ENCODE measurements at regions of chr4 and their contacts with region 1.

Region 1: GRCh38 chr4:87901422-87901992 is 68.7 kb downstream of the MEPE start:
- DNase-seq: no peak
- H3K4me3 ChIP-seq: no peak overlapping the region
- H3K27ac ChIP-seq: peak overlapping the region in 12 of 59 donors; percentile 5 to 58 (median 32)
- H3K27me3 ChIP-seq: no peaks in the 10 kb centered on the region
- CTCF ChIP-seq: no peak

Region 2: GRCh38 chr4:87058356-87059073 is 843.0 kb before region 1 on chr4:
- intact Hi-C with region 1: no loop called
- DNase-seq: peak in 5 of 10 donors; percentile 43 to 64 (median 59)
- H3K4me3 ChIP-seq: no peak overlapping the region
- H3K27ac ChIP-seq: peak overlapping the region in 48 of 59 donors; percentile 4 to 85 (median 46)
- H3K27me3 ChIP-seq: no peaks in the 10 kb centered on the region
- CTCF ChIP-seq: peak in 49 of 56 donors; percentile 11 to 70 (median 44)

Region 3: GRCh38 chr4:87745064-87745807 is 156.3 kb before region 1 on chr4:
- intact Hi-C with region 1: no loop called
- DNase-seq: no peak
- H3K4me3 ChIP-seq: no peak overlapping the region
- H3K27ac ChIP-seq: no peak overlapping the region
- H3K27me3 ChIP-seq: no peaks in the 10 kb centered on the region
- CTCF ChIP-seq: no peak

Region 4: GRCh38 chr4:87865960-87866598 is 35.4 kb before region 1 on chr4:
- intact Hi-C with region 1: loop called in 1 of 2 experiments (anchors 5 kb)
- DNase-seq: no peak
- H3K4me3 ChIP-seq: no peak overlapping the region
- H3K27ac ChIP-seq: no peak overlapping the region
- H3K27me3 ChIP-seq: no peaks in the 10 kb centered on the region
- CTCF ChIP-seq: no peak

Region 5: GRCh38 chr4:87965501-87965975 is 64.0 kb after region 1 on chr4:
- intact Hi-C with region 1: loop called in 1 of 2 experiments (anchors 5 kb)
- DNase-seq: no peak
- H3K4me3 ChIP-seq: no peak overlapping the region
- H3K27ac ChIP-seq: no peak overlapping the region
- H3K27me3 ChIP-seq: no peaks in the 10 kb centered on the region
- CTCF ChIP-seq: no peak

Measured in dorsolateral prefrontal cortex (tissue), 120 donors.